CD14-positive monocyte (primary cell): ENCODE measurements at regions of chrX and their contacts with region 1.

Region 1: DNA sequence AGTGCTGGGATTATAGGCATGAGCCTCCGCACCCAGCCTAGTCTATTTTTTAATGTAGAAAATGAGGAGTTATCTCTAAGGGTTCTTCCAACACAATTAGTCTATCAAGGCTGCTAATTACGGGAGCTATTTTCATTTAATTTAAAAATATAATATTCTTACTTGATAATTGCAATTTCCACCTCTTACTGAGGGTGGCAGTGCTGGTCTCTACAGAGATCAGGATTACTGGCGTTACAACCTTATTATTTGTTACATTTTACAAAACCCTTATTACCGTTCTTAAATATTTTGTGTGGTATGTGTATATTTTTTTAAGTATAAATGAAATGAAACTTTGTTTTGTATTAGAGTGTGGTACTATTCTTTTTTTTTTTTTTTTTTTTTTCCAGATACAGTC is 17.6 kb upstream of the GK start:
- DNase-seq: peak in 2 of 3 donors; percentile 29 to 44
- H3K4me3 ChIP-seq: no peak overlapping the region
- H3K4me3 Mint-ChIP-seq: no peak overlapping the region
- H3K27ac ChIP-seq: no peak overlapping the region
- H3K27ac Mint-ChIP-seq: no peak overlapping the region
- H3K4me1 ChIP-seq: peaks cover 22 to 27% of the 10 kb centered on the region in 2 donors
- H3K4me1 Mint-ChIP-seq: peaks cover 21% of the 10 kb centered on the region
- H3K27me3 ChIP-seq: no peaks in the 10 kb centered on the region
- H3K27me3 Mint-ChIP-seq: peaks cover 0 to 12% (median 0%) of the 10 kb centered on the region in 3 donors
- CTCF ChIP-seq: peak; percentile 63

Region 2: GRCh38 chrX:30713061-30713525 is 77.5 kb after region 1 on chrX:
- intact Hi-C with region 1: loop called (anchors 10 kb)
- DNase-seq: peak; percentile 46 to 53 (median 48)
- H3K4me3 ChIP-seq: no peak overlapping the region
- H3K4me3 Mint-ChIP-seq: no peak overlapping the region
- H3K27ac ChIP-seq: no peak overlapping the region
- H3K27ac Mint-ChIP-seq: peak overlapping the region in 3 of 7 donors; percentile 20 to 61 (median 57)
- H3K4me1 ChIP-seq: peaks cover 0 to 4% of the 10 kb centered on the region in 2 donors
- H3K4me1 Mint-ChIP-seq: no peaks in the 10 kb centered on the region
- H3K27me3 ChIP-seq: peaks cover 0 to 13% of the 10 kb centered on the region in 2 donors
- H3K27me3 Mint-ChIP-seq: peaks cover 0 to 15% (median 0%) of the 10 kb centered on the region in 3 donors
- CTCF ChIP-seq: peak; percentile 45

Region 3: GRCh38 chrX:30971774-30972603 is 336.4 kb after region 1 on chrX:
- intact Hi-C with region 1: loop called in 1 of 2 experiments (anchors 10 kb)
- DNase-seq: peak in 2 of 3 donors; percentile 22 to 32
- H3K4me3 ChIP-seq: peak overlapping the region; percentile 23 to 61 (median 47)
- H3K4me3 Mint-ChIP-seq: peak overlapping the region; percentile 71 to 87
- H3K27ac ChIP-seq: no peak overlapping the region
- H3K27ac Mint-ChIP-seq: peak overlapping the region in 2 of 7 donors; percentile 5 to 37
- H3K4me1 ChIP-seq: peaks cover 0 to 6% of the 10 kb centered on the region in 2 donors
- H3K4me1 Mint-ChIP-seq: peaks cover 12% of the 10 kb centered on the region
- H3K27me3 ChIP-seq: no peaks in the 10 kb centered on the region
- H3K27me3 Mint-ChIP-seq: peaks cover 0 to 2% (median 2%) of the 10 kb centered on the region in 3 donors
- CTCF ChIP-seq: peak; percentile 71